ENCODE measurements at regions of chr1 and their contacts with region 1.

Region 1: GRCh38 chr1:85321237-85321964 is 45.0 kb upstream of the BCL10 start:
- DNase-seq: no peak
- H3K4me3 ChIP-seq: no peak overlapping the region
- H3K27me3 ChIP-seq: no peaks in the 10 kb centered on the region
- CTCF ChIP-seq: no peak

Region 2: DNA sequence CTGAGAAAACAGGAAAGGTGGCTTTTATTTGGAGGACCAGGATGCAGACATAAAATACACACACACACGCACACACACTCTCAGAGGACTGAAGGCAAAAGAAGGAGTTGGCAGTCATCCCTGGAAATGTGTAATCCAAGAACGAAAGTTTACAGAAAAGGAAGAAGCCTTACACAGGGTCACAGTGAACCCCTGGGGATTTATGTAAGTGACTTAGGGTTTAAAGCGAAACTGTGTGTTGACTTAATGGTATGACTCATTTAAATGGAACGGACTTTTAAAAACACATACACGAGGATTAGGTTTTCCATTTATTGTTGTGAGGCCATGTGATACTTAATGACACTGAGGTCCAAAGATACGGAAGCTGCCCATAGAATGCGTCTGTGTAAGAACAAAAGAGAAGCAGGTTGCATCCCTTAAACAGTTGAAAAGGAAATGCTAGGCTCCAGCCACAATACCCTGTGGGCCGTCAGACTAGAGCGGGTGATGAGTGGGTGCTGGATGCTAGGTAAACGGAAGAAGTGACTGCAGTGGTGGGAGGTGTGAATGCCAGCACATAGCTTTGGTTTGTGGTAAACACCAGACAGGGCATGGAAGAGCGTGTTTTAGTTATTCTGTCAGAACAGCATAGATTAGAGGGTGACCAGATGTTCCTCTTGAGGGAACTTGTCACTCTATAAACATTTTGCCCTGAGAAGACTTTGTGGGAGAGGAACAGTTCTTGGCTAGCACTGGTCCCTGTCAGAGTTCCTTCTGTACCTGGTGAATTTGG is 23.4 kb before region 1 on chr1:
- CTCF ChIA-PET with region 1: no interaction called
- POLR2A ChIA-PET with region 1: interaction called, 11 read pairs
- DNase-seq: peak; percentile 97
- H3K4me3 ChIP-seq: no peak overlapping the region
- H3K27me3 ChIP-seq: no peaks in the 10 kb centered on the region
- CTCF ChIP-seq: no peak

Region 3: GRCh38 chr1:85344256-85344694 is 22.9 kb after region 1 on chr1:
- CTCF ChIA-PET with region 1: interaction called, 3 read pairs
- POLR2A ChIA-PET with region 1: interaction called, 12 read pairs
- DNase-seq: no peak
- H3K4me3 ChIP-seq: no peak overlapping the region
- H3K27me3 ChIP-seq: no peaks in the 10 kb centered on the region
- CTCF ChIP-seq: peak; percentile 80

Region 4: GRCh38 chr1:85379203-85380136 is 58.1 kb after region 1 on chr1:
- CTCF ChIA-PET with region 1: no interaction called
- POLR2A ChIA-PET with region 1: interaction called, 10 read pairs
- DNase-seq: no peak
- H3K4me3 ChIP-seq: no peak overlapping the region
- H3K27me3 ChIP-seq: no peaks in the 10 kb centered on the region
- CTCF ChIP-seq: no peak

Region 5: GRCh38 chr1:85494904-85495266 is 173.5 kb after region 1 on chr1:
- CTCF ChIA-PET with region 1: no interaction called
- POLR2A ChIA-PET with region 1: no interaction called
- DNase-seq: no peak
- H3K4me3 ChIP-seq: no peak overlapping the region
- H3K27me3 ChIP-seq: no peaks in the 10 kb centered on the region
- CTCF ChIP-seq: peak; percentile 31; the same call in 1 of the 2 replicates